GM10248 (cell line): ENCODE measurements at regions of chr17 and their contacts with region 1.

Region 1: DNA sequence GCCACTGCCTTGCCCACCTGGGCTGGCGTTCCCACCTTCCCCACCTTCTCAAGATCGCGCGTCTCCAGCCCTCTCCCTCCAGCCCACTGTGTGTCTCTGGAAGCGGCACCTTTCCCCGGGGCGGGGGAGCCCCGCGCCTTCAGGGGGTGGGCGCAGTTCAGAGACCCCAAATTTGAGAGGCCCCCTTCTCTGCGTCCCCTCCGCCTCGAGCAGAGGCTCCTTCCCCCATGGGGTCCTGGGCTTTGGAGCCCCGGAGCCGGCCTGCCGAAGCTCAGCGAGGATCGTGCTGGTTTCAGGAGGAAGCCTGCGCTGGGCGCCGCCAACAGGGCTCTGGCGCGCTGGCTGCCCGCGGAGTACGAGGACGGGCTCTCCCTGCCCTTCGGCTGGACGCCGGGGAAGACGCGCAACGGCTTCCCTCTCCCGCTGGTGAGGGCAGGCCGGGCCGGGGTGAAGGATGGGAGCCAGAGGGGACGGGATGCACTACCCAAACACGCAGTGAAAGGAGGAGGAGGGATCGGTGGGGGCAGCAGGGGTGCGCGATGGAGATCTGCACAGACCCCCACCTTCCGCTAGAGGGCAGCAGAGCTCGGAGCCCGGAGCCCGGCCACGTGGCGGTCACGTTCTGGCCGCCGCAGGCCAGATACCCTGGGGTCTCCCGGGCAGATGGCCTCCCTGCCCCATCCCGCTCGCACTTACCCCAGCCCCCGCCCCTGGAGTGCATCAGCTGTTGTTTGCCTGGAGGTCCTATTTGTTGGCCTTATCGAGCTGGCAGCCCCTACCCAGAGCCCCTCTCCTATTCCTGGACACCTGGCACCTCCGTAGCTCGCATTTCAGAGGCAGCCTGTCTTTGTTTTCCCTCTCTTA is 11.1 kb downstream of the LPO start:
- DNase-seq: peak; percentile 95
- CTCF ChIP-seq: peak; percentile 83

Region 2: GRCh38 chr17:58082870-58083490 is 166.5 kb before region 1 on chr17 and contains the start of gene DYNLL2:
- CTCF ChIA-PET with region 1: no interaction called
- POLR2A ChIA-PET with region 1: no interaction called
- DNase-seq: peak; percentile 95
- CTCF ChIP-seq: no peak

Region 3: DNA sequence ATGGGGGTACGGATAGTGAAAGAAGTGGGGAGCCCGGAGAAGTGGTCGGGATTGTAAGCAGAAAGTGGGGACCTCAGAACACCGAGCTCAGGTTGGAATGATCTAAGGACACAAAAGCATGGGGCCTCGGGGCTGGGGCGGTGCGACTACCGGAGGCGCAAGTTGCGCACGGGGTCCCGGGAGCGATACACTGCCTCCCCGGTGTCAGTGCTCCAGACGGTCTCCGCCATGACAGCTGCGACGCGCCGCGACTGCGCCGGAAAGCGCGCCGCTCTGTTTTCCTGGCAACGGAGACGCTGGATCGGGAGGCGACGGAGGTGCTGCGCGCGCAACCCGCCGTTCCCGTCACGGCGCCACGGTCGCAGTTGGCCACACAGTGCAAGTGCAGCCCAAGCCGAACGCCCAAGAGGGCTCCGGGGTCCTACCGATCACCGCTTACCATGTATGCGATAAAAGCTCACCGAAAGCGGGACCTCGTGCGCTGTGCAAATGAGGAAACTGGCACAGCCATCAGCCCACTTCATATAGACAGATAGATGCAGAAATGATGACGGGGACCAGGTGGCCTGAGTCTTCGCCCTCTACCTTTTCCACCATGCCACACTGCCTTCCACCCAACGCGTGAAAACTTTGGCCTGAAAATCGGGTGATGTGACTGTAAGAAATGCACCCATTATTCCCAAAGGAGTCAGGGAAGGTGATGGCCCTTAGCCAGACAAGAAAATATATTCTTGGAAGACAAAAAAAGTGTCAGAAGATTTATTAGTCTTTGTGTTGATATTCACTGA is 30.3 kb before region 1 on chr17 and contains the start of gene MKS1:
- CTCF ChIA-PET with region 1: interaction called, 19 read pairs
- POLR2A ChIA-PET with region 1: no interaction called
- DNase-seq: peak; percentile 99
- CTCF ChIP-seq: peak; percentile 72

Region 4: DNA sequence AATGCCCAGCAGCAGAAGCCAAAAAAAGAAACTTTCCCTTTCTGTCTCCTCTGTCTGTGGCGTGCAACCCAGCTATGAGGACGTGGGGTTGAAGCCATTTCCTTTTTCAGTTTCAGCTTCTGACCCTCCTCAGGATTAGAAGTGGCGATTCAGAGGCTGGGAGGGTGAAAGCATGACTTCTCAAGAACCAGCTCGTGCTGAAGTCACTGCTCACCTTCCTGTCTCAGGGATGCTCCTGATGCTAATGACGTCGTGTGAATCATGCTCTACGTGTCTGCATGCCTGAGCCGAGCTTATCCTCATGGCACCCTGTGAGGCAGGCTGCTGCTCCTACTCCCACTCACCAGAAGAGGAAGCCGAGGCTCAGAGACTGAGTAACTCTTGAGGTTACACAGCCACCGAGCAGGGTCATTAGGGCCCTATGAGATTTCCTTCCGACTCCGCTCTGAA is 16.8 kb before region 1 on chr17:
- CTCF ChIA-PET with region 1: interaction called, 84 read pairs
- POLR2A ChIA-PET with region 1: no interaction called
- DNase-seq: peak; percentile 76
- CTCF ChIP-seq: no peak

Region 5: DNA sequence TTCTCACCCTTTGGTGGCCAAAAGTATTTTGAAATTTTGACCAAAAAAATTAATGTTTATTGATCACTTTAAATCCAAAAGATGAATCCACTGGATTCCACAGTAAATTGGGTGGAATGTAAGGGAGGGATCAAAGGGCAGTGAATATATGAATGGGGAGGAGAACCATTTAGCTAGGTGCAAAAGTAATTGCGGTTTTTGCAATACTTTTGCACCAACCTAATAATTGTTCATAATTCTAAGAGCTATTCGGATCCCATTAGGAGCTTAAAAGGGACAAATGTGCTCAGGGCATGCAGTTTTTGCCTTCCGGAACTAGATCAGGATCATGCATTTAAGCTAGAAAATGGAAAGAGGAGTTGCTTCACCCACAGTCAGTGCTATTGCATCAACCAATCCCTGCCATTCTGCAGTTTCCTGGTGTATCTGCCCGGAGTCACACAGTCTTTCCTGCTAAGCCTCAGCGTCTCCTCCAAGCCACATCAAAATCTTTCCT is 11.3 kb before region 1 on chr17 and contains the start of gene LPO:
- CTCF ChIA-PET with region 1: interaction called, 84 read pairs
- POLR2A ChIA-PET with region 1: no interaction called
- DNase-seq: no peak
- CTCF ChIP-seq: no peak

Region 6: DNA sequence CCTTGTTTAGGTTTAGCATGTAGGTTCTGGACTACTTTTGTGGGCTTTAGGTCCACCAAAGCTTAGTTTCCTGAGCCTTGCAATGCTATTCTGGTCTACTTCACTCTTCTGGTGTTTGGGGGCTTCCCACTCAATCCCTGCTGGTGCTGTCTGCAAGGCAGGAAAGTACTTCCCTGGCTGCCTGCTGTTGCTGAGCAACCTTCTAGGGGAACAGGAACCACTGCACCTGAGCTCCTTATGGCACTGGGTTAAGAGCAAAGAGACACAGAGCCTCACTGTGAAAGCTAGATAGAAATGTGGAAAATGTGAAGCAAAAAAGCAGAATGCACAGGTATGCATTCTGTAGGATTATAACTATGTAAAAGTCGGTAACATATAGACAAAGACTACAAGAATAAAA is 14.3 kb after region 1 on chr17:
- CTCF ChIA-PET with region 1: interaction called, 12 read pairs
- POLR2A ChIA-PET with region 1: no interaction called
- DNase-seq: no peak
- CTCF ChIP-seq: no peak

Region 7: DNA sequence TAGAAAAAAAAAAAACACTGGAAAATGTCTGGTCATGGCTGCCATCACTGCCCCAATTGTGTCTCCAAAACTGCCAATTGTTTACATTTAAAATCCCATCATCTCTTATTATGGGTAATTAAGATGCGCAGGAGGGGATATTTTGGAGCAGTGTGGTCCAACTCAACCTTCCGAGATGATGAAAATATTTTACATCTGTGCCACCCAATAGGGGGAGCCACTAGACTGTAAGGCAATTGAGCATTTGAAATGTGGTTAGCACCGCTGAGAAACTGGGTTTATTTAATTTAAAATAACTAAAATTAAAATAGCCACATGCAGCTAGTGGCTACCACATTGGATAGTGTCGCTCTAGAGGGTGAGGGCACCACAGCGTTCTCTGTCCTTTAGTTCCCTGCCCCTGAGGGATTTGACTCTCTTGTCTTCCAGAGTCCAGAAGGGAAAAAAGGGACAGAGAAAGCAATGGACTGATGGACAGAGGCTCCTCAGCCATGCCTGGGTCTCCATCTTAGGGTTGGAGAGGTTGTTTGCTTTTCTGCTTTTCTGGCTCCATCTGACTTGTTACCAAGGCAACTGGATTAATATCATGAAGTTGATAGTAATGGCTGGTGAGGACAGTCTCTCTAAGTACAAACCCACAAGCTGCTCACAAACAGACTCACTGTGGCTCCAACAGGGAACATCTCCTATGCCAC is 27.8 kb after region 1 on chr17:
- CTCF ChIA-PET with region 1: interaction called, 12 read pairs
- POLR2A ChIA-PET with region 1: no interaction called
- DNase-seq: peak; percentile 48
- CTCF ChIP-seq: peak; percentile 56

Region 8: GRCh38 chr17:58447039-58447975 is 197.8 kb after region 1 on chr17:
- CTCF ChIA-PET with region 1: interaction called, 11 read pairs
- POLR2A ChIA-PET with region 1: no interaction called
- DNase-seq: peak; percentile 70
- CTCF ChIP-seq: peak; percentile 89

Region 9: DNA sequence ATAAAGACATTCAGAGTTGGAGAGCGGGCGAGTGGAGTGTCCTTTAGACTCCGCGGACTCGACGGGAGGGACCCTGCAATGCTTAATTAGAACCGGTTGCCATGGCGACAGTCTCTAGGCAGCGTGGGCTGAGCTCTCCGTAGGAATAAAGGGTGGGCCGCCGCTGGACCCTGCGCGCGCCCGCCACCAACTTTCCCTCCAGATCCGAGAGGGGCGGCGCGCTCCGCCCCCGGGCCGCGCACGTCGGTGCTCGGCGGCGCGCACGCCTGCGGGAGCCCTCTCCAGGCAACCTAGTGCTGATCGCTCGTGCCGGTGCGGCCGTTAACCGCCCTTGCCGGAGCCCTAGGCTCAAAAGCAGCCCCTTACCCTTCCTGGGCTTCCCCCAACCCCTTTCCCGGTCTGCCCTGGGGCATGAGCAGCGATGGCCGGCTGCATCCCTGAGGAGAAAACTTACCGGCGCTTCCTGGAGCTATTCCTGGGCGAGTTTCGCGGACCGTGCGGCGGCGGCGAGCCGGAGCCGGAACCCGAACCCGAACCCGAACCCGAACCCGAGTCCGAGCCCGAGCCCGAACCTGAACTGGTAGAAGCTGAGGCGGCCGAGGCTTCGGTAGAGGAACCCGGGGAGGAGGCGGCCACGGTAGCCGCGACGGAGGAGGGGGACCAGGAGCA is 506.2 kb after region 1 on chr17 and contains the start of gene PPM1E:
- CTCF ChIA-PET with region 1: no interaction called
- POLR2A ChIA-PET with region 1: no interaction called
- DNase-seq: peak; percentile 82
- CTCF ChIP-seq: no peak